ENCODE measurements at regions of chr4 and their contacts with region 1.

Region 1: DNA sequence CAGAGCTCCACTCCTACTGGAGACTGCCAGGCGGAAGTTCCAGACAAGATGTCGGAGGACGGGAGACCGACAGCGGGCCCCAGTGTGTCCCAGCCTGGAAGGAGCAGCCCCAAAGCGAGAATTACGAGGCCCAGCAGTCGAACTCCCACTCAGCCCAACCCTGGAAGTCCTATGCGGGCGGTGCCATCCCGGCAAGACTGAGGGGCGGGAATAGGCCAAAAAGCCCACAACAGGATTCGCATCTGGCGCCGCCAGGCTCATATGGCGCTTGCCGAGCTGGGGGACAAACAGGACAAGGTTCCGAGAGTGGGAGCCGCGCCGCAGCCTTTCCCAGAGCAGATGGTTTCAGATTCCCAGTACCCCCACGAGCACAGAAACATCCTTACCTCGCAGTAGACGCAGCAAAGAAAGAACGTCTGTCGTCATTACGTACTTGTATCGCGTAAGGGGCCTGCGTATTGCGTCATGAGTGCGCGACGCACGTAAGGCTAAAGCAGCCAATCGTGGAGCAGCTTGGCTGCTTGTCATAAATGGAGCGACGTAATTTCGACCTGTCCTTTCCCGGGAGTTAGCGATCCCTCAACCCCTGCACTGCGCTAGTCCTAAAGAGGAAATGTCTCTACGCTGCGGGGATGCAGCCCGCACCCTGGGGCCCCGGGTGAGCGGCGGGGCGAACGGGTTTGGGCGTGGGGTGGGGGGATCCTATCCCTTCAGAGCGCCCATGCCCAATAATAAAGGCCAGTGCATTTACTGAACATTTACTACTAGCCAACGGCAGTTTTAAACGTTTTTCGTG is at the starts of genes LIAS and RPL9:
- DNase-seq: peak; percentile 96
- ATAC-seq: peak; percentile 88
- H3K4me3 Mint-ChIP-seq: peak within 1 kb of the TSS; percentile 98
- H3K27ac Mint-ChIP-seq: peak within 1 kb of the TSS; percentile 100
- H3K4me1 Mint-ChIP-seq: peaks cover 44% of the 10 kb centered on the region
- H3K27me3 Mint-ChIP-seq: no peaks in the 10 kb centered on the region
- total RNA-seq, gene LIAS: 30.7 to 35.5 TPM
- total RNA-seq, gene RPL9: 1,442 to 2,369 TPM

Region 2: GRCh38 chr4:39032218-39033085 is 426.3 kb before region 1 on chr4 and contains the start of gene TMEM156:
- CTCF ChIA-PET with region 1: no interaction called
- POLR2A ChIA-PET with region 1: no interaction called
- intact Hi-C with region 1: loop called in 1 of 2 experiments (anchors 5 kb)
- DNase-seq: peak; percentile 68
- ATAC-seq: peak; percentile 87
- H3K4me3 Mint-ChIP-seq: peak within 1 kb of the TSS; percentile 77
- H3K27ac Mint-ChIP-seq: peak within 1 kb of the TSS; percentile 88
- H3K4me1 Mint-ChIP-seq: peaks cover 46% of the 10 kb centered on the region
- H3K27me3 Mint-ChIP-seq: no peaks in the 10 kb centered on the region
- total RNA-seq, gene TMEM156: 14.3 to 15.4 TPM

Region 3: DNA sequence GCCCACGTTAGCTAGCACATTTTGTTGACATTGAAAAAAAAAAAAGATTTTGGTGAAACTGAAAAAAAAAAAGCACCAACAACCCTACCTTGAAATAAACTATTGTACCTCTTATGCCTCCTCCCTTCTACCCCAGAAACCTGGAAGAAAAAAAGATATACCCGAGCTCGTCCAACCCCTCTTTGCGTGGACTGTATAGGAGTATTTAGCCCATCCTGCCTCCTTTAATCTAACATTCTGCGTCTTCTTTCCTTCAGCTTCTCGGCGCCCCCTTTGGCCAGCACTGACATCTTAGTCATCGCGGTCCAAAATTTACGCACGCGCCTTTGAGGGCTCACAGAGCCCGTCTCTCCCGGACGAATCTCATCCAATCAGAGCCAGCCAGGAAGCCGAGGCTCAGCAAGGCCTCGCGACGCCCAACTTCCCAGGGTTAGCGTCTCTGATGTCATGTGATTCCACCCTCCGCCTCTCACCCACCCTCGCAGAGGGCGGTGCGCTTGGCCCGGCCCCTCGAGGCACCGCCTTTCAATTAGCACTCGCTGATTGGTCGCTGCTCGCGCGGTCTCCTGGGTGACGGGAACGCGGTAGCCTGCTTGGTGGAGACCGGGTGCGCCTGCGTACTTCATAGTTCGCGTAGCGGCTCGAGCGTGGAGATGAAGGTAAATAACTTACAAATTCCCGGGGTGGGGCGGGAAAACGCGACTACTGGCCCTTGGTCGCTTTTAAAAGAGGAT is 276.6 kb before region 1 on chr4 and contains the start of gene WDR19:
- CTCF ChIA-PET with region 1: no interaction called
- POLR2A ChIA-PET with region 1: no interaction called
- intact Hi-C with region 1: loop called (anchors 1 to 5 kb)
- DNase-seq: peak; percentile 99
- ATAC-seq: peak; percentile 99
- H3K4me3 Mint-ChIP-seq: no peak within 1 kb of the TSS
- H3K27ac Mint-ChIP-seq: no peak within 1 kb of the TSS
- H3K4me1 Mint-ChIP-seq: peaks cover 8% of the 10 kb centered on the region
- H3K27me3 Mint-ChIP-seq: peaks cover 3% of the 10 kb centered on the region
- total RNA-seq, gene WDR19: 12.1 to 16.2 TPM

Region 4: GRCh38 chr4:39365830-39366771 is 92.6 kb before region 1 on chr4 and contains the start of gene RFC1:
- CTCF ChIA-PET with region 1: no interaction called
- POLR2A ChIA-PET with region 1: interaction called, 11 read pairs
- intact Hi-C with region 1: loop called in 1 of 2 experiments (anchors 1 kb)
- DNase-seq: peak; percentile 97
- ATAC-seq: peak; percentile 90
- H3K4me3 Mint-ChIP-seq: peak within 1 kb of the TSS; percentile 98
- H3K27ac Mint-ChIP-seq: peak within 1 kb of the TSS; percentile 97
- H3K4me1 Mint-ChIP-seq: peaks cover 32% of the 10 kb centered on the region
- H3K27me3 Mint-ChIP-seq: no peaks in the 10 kb centered on the region
- total RNA-seq, gene RFC1: 112 to 216 TPM

Region 5: GRCh38 chr4:39436218-39436560 is 22.5 kb before region 1 on chr4:
- CTCF ChIA-PET with region 1: no interaction called
- POLR2A ChIA-PET with region 1: no interaction called
- intact Hi-C with region 1: no loop called
- DNase-seq: no peak
- ATAC-seq: no peak
- H3K4me3 Mint-ChIP-seq: no peak overlapping the region
- H3K27ac Mint-ChIP-seq: no peak overlapping the region
- H3K4me1 Mint-ChIP-seq: no peaks in the 10 kb centered on the region
- H3K27me3 Mint-ChIP-seq: no peaks in the 10 kb centered on the region

Region 6: DNA sequence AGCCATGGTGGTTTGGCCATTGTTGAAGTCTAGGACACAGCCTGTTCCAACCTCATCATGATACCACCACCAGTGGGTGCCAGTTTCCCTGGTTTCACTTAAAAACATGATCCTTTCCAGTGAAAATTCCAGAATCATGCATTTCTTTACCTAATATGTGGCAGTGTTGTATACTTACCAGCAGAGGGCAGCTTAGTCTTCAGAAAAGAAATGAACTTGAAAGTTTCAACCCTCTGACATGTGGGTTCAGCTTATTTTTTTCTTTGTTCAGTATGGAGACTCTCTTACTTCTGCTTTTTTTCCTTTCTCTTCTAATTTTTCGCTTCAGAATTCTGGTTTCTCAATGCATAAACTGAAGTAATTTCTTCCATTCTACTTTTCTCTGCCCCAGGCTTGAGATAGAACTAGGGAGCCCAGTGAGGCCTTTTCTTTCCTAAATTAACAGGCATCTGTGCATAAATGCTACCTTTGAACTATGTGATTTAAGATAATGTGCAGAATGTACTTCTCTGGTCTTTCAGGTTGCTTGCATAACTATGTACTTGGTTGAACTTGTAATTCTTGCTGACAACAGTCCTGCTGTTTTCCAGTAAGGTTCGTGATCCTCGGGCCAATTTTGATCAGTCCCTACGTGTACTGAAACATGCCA is 10.8 kb after region 1 on chr4:
- CTCF ChIA-PET with region 1: interaction called, 29 read pairs
- POLR2A ChIA-PET with region 1: interaction called, 6 read pairs
- intact Hi-C with region 1: no loop called
- DNase-seq: peak; percentile 18
- ATAC-seq: peak; percentile 76
- H3K4me3 Mint-ChIP-seq: no peak overlapping the region
- H3K27ac Mint-ChIP-seq: peak overlapping the region; percentile 66
- H3K4me1 Mint-ChIP-seq: peaks cover 20% of the 10 kb centered on the region
- H3K27me3 Mint-ChIP-seq: no peaks in the 10 kb centered on the region

Region 7: DNA sequence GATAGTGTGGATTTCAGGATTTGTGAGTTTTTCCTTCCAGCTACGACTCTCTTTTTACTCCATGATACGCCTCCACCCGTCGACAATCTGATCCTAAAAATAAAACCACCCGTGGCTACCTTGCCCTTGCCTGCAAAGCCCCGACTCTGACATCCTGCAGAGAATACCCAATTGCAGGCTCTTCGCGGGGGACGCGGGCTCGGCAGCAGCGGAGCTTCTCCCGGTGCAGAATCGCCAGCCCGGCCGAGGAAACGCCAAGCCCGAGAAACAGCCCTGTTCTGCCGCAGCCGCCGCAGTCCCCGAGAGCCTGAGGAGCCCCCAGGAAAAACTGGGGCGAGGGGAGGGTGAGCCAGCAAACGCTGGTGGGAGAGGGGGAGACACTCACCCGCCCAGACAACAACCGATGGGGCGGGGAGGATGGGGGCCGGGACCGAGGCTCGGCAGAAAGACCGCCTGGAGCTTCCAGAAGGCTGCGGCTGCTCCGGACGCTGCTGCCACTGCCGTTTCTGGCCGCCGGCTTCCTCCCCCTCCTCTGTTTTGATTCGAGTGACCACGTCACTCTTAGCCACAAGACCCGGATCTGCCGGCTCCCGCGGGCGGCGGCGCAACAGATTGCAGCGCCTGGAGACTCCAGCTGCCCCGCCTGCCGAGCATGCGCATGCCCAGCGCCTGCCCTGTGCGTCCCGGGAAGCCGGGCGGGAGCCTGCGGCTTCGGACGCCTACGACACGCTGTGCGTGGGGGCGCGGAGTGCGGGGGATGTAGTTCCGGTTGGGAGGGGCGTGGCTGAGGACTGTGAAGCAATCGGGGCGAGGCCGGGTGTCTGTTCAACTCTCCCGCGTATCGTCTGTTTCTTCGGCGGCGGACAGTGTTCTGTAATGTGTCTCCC is 179.9 kb after region 1 on chr4 and contains the start of gene SMIM14:
- CTCF ChIA-PET with region 1: no interaction called
- POLR2A ChIA-PET with region 1: interaction called, 8 read pairs
- intact Hi-C with region 1: loop called (anchors 2 to 5 kb)
- DNase-seq: peak; percentile 94
- ATAC-seq: peak; percentile 87
- H3K4me3 Mint-ChIP-seq: peak within 1 kb of the TSS; percentile 83
- H3K27ac Mint-ChIP-seq: peak within 1 kb of the TSS; percentile 86
- H3K4me1 Mint-ChIP-seq: peaks cover 33% of the 10 kb centered on the region
- H3K27me3 Mint-ChIP-seq: no peaks in the 10 kb centered on the region
- total RNA-seq, gene SMIM14: 1.4 to 2.0 TPM

Region 8: DNA sequence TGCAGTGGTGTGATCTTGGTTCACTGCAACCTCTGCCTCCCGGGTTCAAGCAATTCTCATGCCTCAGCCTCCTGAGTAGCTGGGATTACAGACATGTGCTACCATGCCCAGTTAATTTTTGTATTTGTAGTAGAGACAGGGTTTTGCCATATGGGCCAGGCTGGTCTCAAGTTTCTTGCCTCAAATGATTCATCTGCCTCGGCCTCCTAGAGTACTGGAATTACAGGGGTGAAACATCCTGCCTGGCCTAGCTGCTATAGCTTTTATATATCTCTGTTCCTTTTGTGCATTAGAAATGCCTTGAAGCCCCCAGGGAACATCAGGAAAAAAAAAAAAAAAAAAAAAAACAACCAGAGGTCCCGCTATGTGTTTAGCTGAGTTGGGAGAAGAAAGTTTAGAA is 274.0 kb after region 1 on chr4:
- CTCF ChIA-PET with region 1: no interaction called
- POLR2A ChIA-PET with region 1: no interaction called
- intact Hi-C with region 1: no loop called
- DNase-seq: peak; percentile 23
- ATAC-seq: peak; percentile 83
- H3K4me3 Mint-ChIP-seq: no peak overlapping the region
- H3K27ac Mint-ChIP-seq: no peak overlapping the region
- H3K4me1 Mint-ChIP-seq: peaks cover 27% of the 10 kb centered on the region
- H3K27me3 Mint-ChIP-seq: no peaks in the 10 kb centered on the region

Region 9: GRCh38 chr4:39977489-39978377 is 519.0 kb after region 1 on chr4 and contains the start of gene PDS5A:
- CTCF ChIA-PET with region 1: no interaction called
- POLR2A ChIA-PET with region 1: no interaction called
- intact Hi-C with region 1: loop called in 1 of 2 experiments (anchors 1 kb)
- DNase-seq: peak; percentile 95
- ATAC-seq: peak; percentile 90
- H3K4me3 Mint-ChIP-seq: peak within 1 kb of the TSS; percentile 80
- H3K27ac Mint-ChIP-seq: peak within 1 kb of the TSS; percentile 98
- H3K4me1 Mint-ChIP-seq: peaks cover 38% of the 10 kb centered on the region
- H3K27me3 Mint-ChIP-seq: no peaks in the 10 kb centered on the region
- total RNA-seq, gene PDS5A: 98.5 to 102 TPM